Adrenal gland (tissue), 19 donors: ENCODE measurements at regions of chr19 and their contacts with region 1.

Region 1: DNA sequence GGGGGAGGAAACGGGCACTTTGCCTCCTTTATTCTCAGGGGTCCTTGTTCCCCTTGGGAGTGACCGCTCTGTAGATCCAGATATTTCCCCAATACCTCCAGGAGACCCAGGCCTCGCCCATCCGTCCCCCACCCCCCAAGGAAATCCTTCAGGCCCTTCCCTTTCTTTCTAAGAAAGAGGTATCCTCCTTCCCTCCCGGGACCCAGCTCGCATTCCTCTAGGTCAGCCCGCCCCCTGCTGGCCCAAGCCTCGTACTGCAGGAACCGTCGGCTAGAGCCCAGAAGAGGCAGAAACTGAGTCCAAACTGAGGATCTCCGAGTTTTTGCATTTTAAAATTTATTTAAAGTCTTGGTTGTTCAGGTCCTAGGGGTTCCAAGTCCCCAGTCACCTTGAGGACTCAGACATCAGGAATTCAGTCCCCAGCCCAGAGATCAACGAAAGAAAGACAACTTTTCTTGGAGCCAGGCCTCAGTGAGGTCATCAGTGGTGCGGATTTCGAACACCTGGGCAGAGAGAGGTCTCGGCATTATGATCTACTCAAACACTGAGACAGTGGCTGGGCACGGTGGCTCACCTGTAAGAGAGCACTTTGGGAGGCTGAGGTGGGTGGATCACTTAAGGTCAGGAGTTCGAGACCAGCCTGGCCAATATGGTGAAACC is 7.5 kb upstream of the LRFN1 start:
- DNase-seq: peak; percentile 78 to 94 (median 87)
- H3K4me3 ChIP-seq: no peak overlapping the region
- H3K27ac ChIP-seq: no peak overlapping the region
- H3K4me1 ChIP-seq: no peaks in the 10 kb centered on the region
- H3K27me3 ChIP-seq: no peaks in the 10 kb centered on the region
- CTCF ChIP-seq: peak; percentile 91 to 97 (median 94)
- POLR2A ChIP-seq: no peak

Region 2: DNA sequence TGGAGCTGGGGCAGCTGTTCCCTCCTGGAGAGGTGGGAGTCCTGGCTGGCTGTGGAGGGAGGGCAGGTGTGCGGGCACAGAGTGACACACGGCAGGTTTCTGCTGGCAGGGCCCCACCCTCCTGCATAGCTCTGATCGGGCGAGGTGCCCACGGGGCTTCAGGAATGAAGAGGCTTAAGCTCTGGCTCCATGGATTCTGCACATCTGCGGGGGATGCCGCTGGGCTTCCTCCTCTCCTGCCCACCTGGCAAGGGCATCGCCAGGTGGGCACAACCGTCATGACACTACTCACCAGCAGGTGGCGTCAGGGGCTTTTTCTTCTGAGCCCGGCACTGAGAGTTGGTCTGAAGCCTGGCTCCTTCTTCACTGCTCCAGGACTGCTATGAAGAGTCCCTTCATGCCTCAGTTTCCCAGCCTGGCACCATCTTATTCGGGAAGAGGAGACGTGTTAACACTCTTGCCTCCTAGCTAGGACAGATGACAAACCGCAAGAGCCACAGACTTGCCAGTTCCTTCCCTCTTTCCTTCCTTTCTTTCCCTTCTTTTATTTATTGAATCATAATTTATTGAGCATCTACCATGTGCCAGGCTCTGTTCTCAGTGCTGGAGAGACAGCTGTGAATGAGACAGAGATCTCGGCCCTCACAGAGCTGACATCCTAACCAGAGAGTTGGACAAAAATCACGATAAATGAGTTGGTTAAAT is 217.8 kb before region 1 on chr19:
- intact Hi-C with region 1: loop called in 1 of 2 experiments (anchors 5 kb)
- DNase-seq: peak in 6 of 7 donors; percentile 58 to 83 (median 72)
- H3K4me3 ChIP-seq: no peak overlapping the region
- H3K27ac ChIP-seq: no peak overlapping the region
- H3K4me1 ChIP-seq: peaks cover 3 to 6% of the 10 kb centered on the region in 2 donors
- H3K27me3 ChIP-seq: no peaks in the 10 kb centered on the region
- CTCF ChIP-seq: peak; percentile 55 to 77 (median 65)
- POLR2A ChIP-seq: no peak

Region 3: DNA sequence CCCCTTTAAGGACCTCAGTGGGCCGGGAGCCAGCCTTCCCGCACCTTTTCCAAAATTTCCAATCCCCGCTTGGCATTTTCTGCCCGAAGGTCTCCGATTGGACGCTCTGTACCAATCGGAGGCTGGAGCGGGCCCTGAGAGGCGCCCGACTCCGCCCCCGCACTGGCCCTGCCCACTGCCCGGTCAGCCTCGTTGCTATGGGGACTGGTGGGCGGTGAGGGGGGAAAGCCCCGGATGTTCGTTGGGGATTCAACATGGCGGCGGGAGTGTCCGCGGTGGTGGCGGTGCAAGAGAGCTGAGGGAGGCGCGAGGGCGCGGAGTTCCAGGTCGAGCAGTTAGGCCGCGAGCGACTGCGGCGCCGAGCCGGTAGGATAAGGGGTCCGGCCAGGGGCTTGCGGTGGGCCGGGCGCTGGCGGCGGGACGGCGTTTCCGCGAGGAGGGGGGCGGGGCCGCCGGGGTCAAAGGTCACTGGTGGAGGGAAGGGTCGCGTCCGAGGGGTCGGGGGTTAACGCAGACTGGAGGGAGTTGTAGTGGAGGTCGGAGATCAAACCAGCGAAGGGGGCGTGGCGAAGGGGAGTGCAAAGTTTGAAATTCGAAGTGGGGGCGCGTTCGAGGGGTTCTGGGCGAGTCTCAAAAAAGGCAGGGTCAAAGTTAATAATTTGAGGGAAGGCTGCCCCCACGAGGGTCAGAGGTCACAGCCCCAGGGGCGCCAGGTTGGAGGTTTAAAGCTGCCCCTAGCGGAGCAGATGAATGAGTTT is 202.4 kb before region 1 on chr19 and contains the start of gene PAK4:
- intact Hi-C with region 1: loop called in 1 of 2 experiments (anchors 5 kb)
- DNase-seq: peak; percentile 97 to 99 (median 98)
- H3K4me3 ChIP-seq: peak within 1 kb of the TSS; percentile 66 to 98 (median 87)
- H3K27ac ChIP-seq: peak within 1 kb of the TSS; percentile 30 to 82 (median 57)
- H3K4me1 ChIP-seq: peaks cover 18 to 40% of the 10 kb centered on the region in 2 donors
- H3K27me3 ChIP-seq: no peaks in the 10 kb centered on the region
- CTCF ChIP-seq: no peak
- POLR2A ChIP-seq: peak; percentile 29 to 46
- total RNA-seq, gene PAK4: 7.5 to 61.0 (median 20.1) TPM

Region 4: DNA sequence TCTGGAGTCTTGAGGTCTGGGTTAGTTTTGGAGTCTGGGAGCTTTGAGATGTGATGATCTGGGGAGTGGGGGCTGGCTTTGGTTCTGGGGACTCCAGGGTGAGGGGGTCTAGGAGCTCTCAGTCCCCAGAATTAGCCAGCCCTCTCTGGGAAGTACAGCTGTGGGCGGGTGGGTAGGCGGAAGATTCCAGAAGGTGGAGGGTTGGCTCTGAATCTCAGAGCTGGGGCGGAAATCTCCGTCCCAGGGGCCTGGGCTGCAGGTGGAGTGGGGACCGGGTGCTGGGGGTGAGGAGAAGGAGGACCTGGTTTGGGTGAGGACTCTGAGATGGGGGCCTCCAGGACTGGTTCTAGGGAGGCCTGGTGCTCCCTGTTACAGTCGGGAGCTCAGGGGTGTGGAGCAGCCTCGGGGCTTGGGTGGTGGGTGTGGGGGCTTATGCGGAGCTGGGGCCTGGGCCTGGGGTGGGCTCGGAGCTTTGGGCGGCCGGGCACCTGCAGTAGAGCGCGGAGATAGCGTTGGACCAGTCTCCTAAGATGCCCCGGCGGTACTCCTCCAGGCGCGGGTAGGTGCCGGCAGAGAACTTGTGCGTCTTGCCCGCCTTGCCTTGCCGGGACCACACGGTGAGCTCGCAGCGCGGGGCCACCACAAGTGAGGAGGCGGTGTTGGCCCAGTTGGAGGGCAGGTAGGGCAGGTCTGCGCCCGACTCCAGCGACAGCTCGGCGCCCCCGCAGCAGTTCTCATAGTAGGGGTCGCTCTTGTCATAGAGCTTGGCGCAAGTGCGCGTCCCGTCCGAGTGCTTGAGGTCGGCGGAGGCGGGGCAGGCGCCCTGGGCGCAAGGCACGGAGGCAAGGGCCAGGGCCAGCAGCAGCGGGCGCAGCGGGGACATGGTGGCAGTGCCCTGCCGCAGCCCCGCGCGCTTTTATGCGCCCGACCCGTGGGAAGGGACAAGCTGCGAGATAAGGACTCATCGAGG is 124.5 kb before region 1 on chr19 and contains the start of gene SYCN:
- intact Hi-C with region 1: loop called in 1 of 2 experiments (anchors 10 kb)
- DNase-seq: no peak
- H3K4me3 ChIP-seq: no peak within 1 kb of the TSS
- H3K27ac ChIP-seq: no peak within 1 kb of the TSS
- H3K4me1 ChIP-seq: no peaks in the 10 kb centered on the region
- H3K27me3 ChIP-seq: peaks cover 6% of the 10 kb centered on the region
- CTCF ChIP-seq: no peak
- POLR2A ChIP-seq: no peak
- total RNA-seq, gene SYCN: 0.43 to 0.76 (median 0.67) TPM in 3 of 9 donors, not detected in the others

Region 5: GRCh38 chr19:39363901-39364457 is 35.8 kb after region 1 on chr19:
- intact Hi-C with region 1: no loop called
- DNase-seq: no peak
- H3K4me3 ChIP-seq: no peak overlapping the region
- H3K27ac ChIP-seq: peak overlapping the region in 2 of 5 donors; percentile 73
- H3K4me1 ChIP-seq: peaks cover 12 to 26% of the 10 kb centered on the region in 2 donors
- H3K27me3 ChIP-seq: no peaks in the 10 kb centered on the region
- CTCF ChIP-seq: no peak
- POLR2A ChIP-seq: no peak

Region 6: DNA sequence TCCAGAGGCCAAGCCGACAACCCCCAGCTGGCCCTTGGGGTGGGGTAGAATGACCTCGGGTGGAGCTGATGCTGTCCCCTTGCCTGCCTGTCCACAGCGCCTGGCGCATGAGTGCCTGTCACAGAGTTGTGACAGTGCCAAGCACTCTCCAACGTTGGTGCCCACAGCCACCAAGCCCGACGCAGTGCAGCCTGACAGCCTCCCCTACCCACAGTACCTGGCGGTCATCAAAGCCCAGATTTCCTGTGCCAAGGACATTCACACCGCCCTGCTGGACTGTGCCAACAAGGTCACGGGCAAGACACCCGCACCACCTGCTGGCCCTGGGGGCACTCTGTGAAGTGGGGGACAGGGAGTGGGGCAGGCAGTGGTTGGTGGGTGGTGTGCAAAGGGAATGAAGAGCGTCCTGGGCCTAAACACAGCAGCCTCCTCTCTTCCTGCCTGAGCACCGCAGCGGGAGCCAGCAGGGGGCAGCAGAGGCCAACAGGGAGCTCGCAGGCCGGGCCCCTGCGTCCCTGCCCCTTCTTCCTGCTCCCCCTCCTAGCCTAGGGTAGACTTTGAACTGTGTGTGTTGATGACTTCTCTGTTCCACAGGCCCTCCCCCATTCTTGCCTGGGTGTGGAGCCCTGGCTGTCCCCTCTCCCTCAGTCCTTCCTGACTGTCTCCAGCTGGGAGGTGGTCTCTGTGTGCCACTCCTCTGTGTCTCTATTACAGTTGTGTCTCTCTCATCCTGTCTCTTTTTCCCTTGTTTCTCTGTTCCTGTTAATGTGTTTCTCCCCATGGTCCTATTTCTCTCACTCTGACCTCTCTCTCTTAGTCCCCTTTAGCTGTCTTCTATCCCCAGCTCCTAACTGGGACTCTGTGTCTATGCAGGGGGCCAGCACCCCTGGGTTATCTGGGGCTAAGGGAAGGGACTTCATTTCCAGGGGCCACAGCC is 69.5 kb after region 1 on chr19:
- intact Hi-C with region 1: no loop called
- DNase-seq: peak; percentile 88 to 94 (median 90)
- H3K4me3 ChIP-seq: peak overlapping the region in 1 of 4 donors; percentile 33
- H3K27ac ChIP-seq: peak overlapping the region; percentile 68 to 86 (median 80)
- H3K4me1 ChIP-seq: peaks cover 20 to 35% of the 10 kb centered on the region in 2 donors
- H3K27me3 ChIP-seq: no peaks in the 10 kb centered on the region
- CTCF ChIP-seq: peak; percentile 90 to 99 (median 98)
- POLR2A ChIP-seq: peak in 1 of 2 donors; percentile 12

Region 7: GRCh38 chr19:39864118-39864517 is 535.9 kb after region 1 on chr19:
- intact Hi-C with region 1: no loop called
- DNase-seq: no peak
- H3K4me3 ChIP-seq: no peak overlapping the region
- H3K27ac ChIP-seq: no peak overlapping the region
- H3K4me1 ChIP-seq: no peaks in the 10 kb centered on the region
- H3K27me3 ChIP-seq: no peaks in the 10 kb centered on the region
- CTCF ChIP-seq: no peak
- POLR2A ChIP-seq: no peak